IMR-90 (cell line): ENCODE measurements at regions of chr14 and their contacts with region 1.

Region 1: DNA sequence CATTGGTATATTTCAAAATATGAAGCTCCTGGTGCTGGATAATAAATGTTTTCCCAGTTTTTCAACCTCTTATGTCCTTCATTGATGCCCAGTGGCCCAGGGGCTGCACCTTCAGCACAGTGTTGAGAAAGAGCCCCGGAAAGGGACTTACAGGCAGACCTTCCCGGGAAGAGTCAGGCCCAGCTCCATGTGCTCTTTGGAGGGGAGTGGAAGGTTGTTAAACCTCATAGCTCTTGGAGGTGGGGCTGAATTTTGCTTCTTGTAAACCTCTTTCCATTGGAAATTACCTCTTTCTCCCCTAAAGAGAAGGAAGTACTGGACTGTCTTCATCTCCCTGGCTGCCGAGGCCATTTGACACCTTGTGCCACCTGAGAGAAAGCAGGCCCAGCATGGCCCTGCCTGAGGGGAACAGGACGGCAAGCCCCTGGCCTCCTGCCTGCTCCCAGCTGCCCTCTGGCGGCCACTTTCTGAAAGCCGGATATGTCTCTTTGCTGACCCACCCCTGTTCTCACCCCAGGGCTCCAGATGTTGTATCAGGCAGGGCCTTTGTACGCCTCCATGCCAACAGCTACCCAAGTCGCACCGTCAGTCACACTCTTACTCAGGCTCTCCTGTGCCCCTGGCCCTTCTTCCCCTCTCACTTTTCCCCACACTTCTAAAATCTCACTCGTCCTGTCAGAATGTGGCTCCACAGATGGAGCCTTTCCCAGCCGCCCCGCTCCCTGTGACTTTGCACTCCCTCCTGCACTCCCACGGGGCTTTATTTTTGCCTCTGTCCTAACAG is 43.0 kb downstream of the EVL start:
- DNase-seq: peak; percentile 65
- ATAC-seq: peak; percentile 87
- H3K4me3 ChIP-seq: no peak overlapping the region
- H3K27ac ChIP-seq: no peak overlapping the region
- H3K4me1 ChIP-seq: peaks cover 28% of the 10 kb centered on the region
- H3K27me3 ChIP-seq: no peaks in the 10 kb centered on the region
- CTCF ChIP-seq: peak; percentile 85
- POLR2A ChIP-seq: no peak
- RAD21 ChIP-seq: peak; percentile 93

Region 2: GRCh38 chr14:99774556-99775307 is 333.5 kb before region 1 on chr14:
- CTCF ChIA-PET with region 1: no interaction called
- POLR2A ChIA-PET with region 1: interaction called, 10 read pairs
- dilution Hi-C with region 1: no loop called
- in situ Hi-C with region 1: no loop called
- intact Hi-C with region 1: no loop called
- DNase-seq: peak; percentile 52
- ATAC-seq: peak; percentile 19
- H3K4me3 ChIP-seq: no peak overlapping the region
- H3K27ac ChIP-seq: no peak overlapping the region
- H3K4me1 ChIP-seq: peaks cover 9% of the 10 kb centered on the region
- H3K27me3 ChIP-seq: no peaks in the 10 kb centered on the region
- CTCF ChIP-seq: no peak
- POLR2A ChIP-seq: no peak
- RAD21 ChIP-seq: no peak

Region 3: GRCh38 chr14:100031536-100032281 is 76.5 kb before region 1 on chr14:
- CTCF ChIA-PET with region 1: interaction called, 5 read pairs
- POLR2A ChIA-PET with region 1: no interaction called
- dilution Hi-C with region 1: no loop called
- in situ Hi-C with region 1: no loop called
- intact Hi-C with region 1: loop called (anchors 5 kb)
- DNase-seq: peak; percentile 99
- ATAC-seq: peak; percentile 73
- H3K4me3 ChIP-seq: peak overlapping the region; percentile 48
- H3K27ac ChIP-seq: peak overlapping the region; percentile 99
- H3K4me1 ChIP-seq: peaks cover 21% of the 10 kb centered on the region
- H3K27me3 ChIP-seq: no peaks in the 10 kb centered on the region
- CTCF ChIP-seq: 0 out of 2 replicates have a peak, but pooled peaks have one; percentile 6
- POLR2A ChIP-seq: peak; percentile 80; the same call in 1 of the 2 replicates
- RAD21 ChIP-seq: peak; percentile 6; the same call in 1 of the 2 replicates